ENCODE measurements at regions of chr14 and their contacts with region 1.

Region 1: DNA sequence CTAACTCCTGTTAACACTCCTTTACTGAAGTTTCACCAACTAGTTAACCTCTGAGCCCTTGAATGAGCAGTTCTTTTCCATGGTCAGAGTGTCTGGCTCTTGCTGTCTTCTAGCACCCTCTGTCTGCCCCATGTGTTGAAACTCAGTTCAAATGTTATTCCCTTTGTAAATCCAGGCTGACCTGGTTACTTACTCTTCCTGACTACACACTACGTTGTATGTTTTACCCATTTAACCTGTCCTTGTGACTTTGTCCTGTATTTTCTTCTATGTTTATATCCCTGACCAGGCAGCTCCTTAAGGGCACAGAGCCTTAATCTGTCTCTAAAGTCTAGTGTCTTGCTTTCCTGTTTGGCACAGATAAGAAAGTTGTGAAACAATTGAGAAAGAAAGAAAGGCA is 389.0 kb upstream of the RPL10L start:
- DNase-seq: no peak
- H3K4me3 ChIP-seq: no peak overlapping the region
- H3K27ac ChIP-seq: no peak overlapping the region
- H3K4me1 ChIP-seq: peaks cover 0 to 4% (median 0%) of the 10 kb centered on the region in 4 experiments; a peak in 2 of 7 replicates
- H3K27me3 ChIP-seq: no peaks in the 10 kb centered on the region
- CTCF ChIP-seq: peak in 2 of 3 experiments; percentile 66 to 73; a peak in 3 of 4 replicates
- EP300 ChIP-seq: no peak
- POLR2A ChIP-seq: no peak
- RAD21 ChIP-seq: peak; percentile 94 to 95

Region 2: DNA sequence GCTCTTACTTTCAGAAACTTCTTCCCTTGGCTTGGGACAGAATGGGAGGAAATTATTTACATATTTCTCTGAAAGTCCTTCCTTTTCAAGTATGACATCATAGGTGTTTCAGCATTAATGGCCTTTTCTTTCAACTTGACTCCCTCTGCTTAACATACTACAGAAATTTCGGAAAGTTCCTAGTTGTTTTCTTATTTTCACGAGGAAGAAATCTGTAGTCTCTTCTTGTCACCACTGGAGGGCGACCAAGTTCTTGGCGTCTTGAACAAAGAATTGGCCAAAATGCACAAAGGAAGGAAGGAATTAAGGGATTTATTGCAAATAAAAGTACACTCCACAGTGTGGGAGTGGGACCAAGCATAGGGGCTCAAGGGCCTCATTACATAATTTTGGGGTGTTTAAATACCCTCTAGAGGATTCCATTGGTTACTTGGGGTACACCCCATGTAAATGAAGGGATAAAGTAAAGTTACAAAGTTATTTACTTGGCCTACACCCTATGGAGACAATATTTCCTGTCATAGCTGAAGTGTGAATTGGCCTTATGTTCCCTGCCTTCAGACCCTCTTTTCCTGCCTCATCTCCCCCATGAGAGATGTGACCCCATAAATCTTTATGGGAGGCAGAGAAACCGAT is 459.4 kb before region 1 on chr14:
- CTCF ChIA-PET with region 1: interaction called, 14 read pairs
- POLR2A ChIA-PET with region 1: no interaction called
- DNase-seq: peak; percentile 2 to 51
- H3K4me3 ChIP-seq: no peak overlapping the region
- H3K27ac ChIP-seq: no peak overlapping the region
- H3K4me1 ChIP-seq: no peaks in the 10 kb centered on the region
- H3K27me3 ChIP-seq: no peaks in the 10 kb centered on the region
- CTCF ChIP-seq: peak in 2 of 3 experiments; percentile 53 to 62; a peak in 3 of 4 replicates
- EP300 ChIP-seq: no peak
- POLR2A ChIP-seq: no peak
- RAD21 ChIP-seq: peak; percentile 86 to 88

Measured in H1 (cell line).